ENCODE measurements at regions of chr4 and their contacts with region 1.

Region 1: DNA sequence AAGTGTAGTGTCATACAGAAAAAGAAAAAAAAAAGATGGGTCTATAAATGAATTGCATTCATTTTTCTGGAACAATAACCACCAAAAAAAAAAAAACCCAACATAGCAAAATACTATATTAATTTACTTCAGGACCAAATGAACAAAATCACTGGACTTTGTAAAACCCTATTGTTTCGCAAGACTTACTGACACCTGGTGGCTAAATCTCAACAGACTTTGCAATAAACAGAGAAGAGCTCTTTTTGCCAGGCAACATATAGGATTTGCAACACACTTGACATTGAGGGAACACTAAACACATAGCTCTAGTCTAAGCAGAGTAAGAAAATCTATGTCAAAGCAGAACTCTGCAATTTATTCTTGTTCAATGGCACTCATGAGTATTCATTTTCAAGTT is 990.2 kb downstream of the STPG2 start:
- DNase-seq: no peak
- H3K4me3 Mint-ChIP-seq: no peak overlapping the region
- H3K27ac Mint-ChIP-seq: no peak overlapping the region
- H3K4me1 Mint-ChIP-seq: no peaks in the 10 kb centered on the region
- H3K27me3 Mint-ChIP-seq: no peaks in the 10 kb centered on the region
- CTCF ChIP-seq: no peak

Region 2: GRCh38 chr4:95155759-95156451 is 1997.1 kb before region 1 on chr4:
- CTCF ChIA-PET with region 1: interaction called, 5 read pairs
- intact Hi-C with region 1: loop called (anchors 5 kb)
- DNase-seq: no peak
- H3K4me3 Mint-ChIP-seq: no peak overlapping the region
- H3K27ac Mint-ChIP-seq: no peak overlapping the region
- H3K4me1 Mint-ChIP-seq: no peaks in the 10 kb centered on the region
- H3K27me3 Mint-ChIP-seq: no peaks in the 10 kb centered on the region
- CTCF ChIP-seq: peak; percentile 30

Region 3: DNA sequence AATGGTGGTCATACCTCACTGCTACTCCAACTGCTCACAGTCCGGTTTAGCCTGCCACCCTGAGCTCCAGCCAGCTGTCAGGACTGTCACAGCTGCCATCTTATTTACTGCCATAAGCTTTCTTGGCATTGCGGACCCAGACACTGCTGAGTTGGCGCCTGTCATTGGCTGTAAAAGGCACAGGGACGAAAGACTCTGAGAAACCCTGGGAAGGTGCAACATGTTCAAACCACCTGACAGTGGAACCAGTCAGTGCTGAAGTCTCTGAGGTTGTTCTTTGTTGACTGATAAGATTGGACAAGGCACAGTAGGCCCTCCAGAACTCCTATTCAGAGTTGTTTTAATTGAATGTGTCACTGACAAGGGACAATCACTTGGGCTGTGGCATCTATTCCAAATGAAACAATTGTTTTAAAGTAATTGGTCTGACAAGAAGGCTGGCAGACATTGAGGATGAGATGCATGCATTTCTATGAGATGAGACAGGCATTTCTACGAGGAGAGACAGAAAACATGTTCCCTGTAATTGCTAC is 62.4 kb after region 1 on chr4:
- CTCF ChIA-PET with region 1: no interaction called
- intact Hi-C with region 1: no loop called
- DNase-seq: no peak
- H3K4me3 Mint-ChIP-seq: no peak overlapping the region
- H3K27ac Mint-ChIP-seq: no peak overlapping the region
- H3K4me1 Mint-ChIP-seq: no peaks in the 10 kb centered on the region
- H3K27me3 Mint-ChIP-seq: no peaks in the 10 kb centered on the region
- CTCF ChIP-seq: no peak

Region 4: GRCh38 chr4:97235521-97235920 is 82.5 kb after region 1 on chr4:
- CTCF ChIA-PET with region 1: no interaction called
- intact Hi-C with region 1: no loop called
- DNase-seq: no peak
- H3K4me3 Mint-ChIP-seq: no peak overlapping the region
- H3K27ac Mint-ChIP-seq: no peak overlapping the region
- H3K4me1 Mint-ChIP-seq: no peaks in the 10 kb centered on the region
- H3K27me3 Mint-ChIP-seq: no peaks in the 10 kb centered on the region
- CTCF ChIP-seq: no peak